Caco-2 (cell line): ENCODE measurements at regions of chrX and their contacts with region 1.

Region 1: DNA sequence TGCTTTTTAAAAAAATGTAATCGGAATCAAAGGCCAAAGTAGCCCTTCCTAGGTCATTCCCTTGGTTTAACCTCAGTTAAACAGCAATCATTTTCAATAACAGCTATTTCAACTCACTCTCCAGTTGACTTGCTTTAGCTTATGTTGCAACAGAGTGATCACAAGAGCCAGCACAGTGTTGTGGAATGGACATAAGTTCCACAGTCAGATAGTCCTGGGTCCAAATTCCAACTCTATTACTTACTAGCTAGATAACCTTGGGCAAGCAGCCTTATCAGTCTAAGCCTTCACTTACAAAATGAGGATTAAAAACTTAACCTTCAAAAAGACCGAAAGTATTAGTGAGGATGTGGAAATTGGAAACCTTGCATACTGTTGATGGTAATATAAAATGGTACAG is 9.2 kb upstream of the GPC3 start:
- DNase-seq: peak; percentile 73 to 78
- H3K4me3 ChIP-seq: no peak overlapping the region
- H3K4me3 Mint-ChIP-seq: peak overlapping the region; percentile 35
- H3K27ac Mint-ChIP-seq: peak overlapping the region; percentile 39
- H3K4me1 ChIP-seq: peaks cover 29% of the 10 kb centered on the region
- H3K4me1 Mint-ChIP-seq: peaks cover 24% of the 10 kb centered on the region
- H3K27me3 ChIP-seq: no peaks in the 10 kb centered on the region
- H3K27me3 Mint-ChIP-seq: no peaks in the 10 kb centered on the region
- CTCF ChIP-seq: no peak

Region 2: DNA sequence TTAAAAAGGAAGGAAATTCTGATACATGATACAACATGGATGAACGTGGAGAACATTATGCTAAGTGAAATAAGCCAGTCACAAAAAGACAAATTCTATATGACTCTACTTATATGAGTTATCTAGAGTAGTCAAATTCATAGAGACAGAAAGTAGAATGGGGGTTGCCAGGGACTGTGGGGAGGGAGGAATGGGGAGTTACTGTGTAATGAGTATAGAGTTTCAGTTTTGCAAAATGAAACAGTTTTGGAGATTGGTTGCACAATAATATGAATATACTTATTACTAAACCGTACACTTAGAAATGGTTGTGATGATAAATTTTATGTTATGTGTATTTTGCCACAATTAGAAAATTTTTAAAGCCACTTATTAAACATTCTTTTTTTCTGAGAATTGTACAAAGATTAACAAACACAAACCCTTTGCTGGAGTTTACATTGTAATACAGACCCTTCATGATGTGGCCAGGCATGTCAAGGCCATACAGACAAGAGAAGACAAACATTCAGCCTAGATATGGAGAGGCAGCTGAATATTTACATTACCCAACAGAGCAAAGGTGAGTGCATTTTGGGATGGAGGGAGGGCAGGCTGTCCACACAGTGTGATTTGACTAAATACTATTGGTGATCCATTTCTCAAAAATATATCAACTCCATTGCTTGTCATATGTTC is 12.0 kb after region 1 on chrX:
- CTCF ChIA-PET with region 1: no interaction called
- POLR2A ChIA-PET with region 1: no interaction called
- intact Hi-C with region 1: loop called (anchors 1 kb)
- DNase-seq: peak in 1 of 2 experiments; percentile 40
- H3K4me3 ChIP-seq: no peak overlapping the region
- H3K4me3 Mint-ChIP-seq: peak overlapping the region; percentile 33
- H3K27ac Mint-ChIP-seq: peak overlapping the region; percentile 55
- H3K4me1 ChIP-seq: peaks cover 43% of the 10 kb centered on the region
- H3K4me1 Mint-ChIP-seq: peaks cover 39% of the 10 kb centered on the region
- H3K27me3 ChIP-seq: no peaks in the 10 kb centered on the region
- H3K27me3 Mint-ChIP-seq: no peaks in the 10 kb centered on the region
- CTCF ChIP-seq: no peak

Region 3: DNA sequence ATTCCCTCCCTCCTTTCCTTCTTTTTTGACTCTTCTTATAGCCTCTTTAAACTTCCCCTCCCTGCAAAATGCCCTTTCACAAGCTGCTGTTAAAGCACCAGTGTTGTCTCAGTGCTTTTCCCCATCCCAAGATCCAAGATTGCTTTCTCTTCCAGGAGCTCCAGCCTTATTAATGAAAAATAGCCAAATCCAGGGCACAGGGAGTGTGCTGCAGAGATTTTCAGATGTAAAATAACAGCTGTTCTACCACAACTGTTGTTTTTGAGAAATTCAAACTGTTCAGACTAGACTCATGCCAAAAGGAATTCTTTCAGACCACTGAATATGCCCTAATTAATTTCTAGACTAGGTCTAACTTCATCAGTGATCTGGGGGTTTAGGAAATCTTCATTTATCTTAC is 37.9 kb after region 1 on chrX:
- CTCF ChIA-PET with region 1: no interaction called
- POLR2A ChIA-PET with region 1: no interaction called
- intact Hi-C with region 1: no loop called
- DNase-seq: no peak
- H3K4me3 ChIP-seq: no peak overlapping the region
- H3K4me3 Mint-ChIP-seq: no peak overlapping the region
- H3K27ac Mint-ChIP-seq: no peak overlapping the region
- H3K4me1 ChIP-seq: no peaks in the 10 kb centered on the region
- H3K4me1 Mint-ChIP-seq: no peaks in the 10 kb centered on the region
- H3K27me3 ChIP-seq: no peaks in the 10 kb centered on the region
- H3K27me3 Mint-ChIP-seq: no peaks in the 10 kb centered on the region
- CTCF ChIP-seq: no peak